ENCODE measurements at regions of chr6 and their contacts with region 1.

Region 1: GRCh38 chr6:30883685-30884520 is at the start of gene DDR1:
- DNase-seq: peak; percentile 95
- H3K4me3 Mint-ChIP-seq: peak within 1 kb of the TSS; percentile 83
- H3K27ac Mint-ChIP-seq: peak within 1 kb of the TSS; percentile 95
- H3K4me1 Mint-ChIP-seq: peaks cover 49% of the 10 kb centered on the region
- H3K27me3 Mint-ChIP-seq: no peaks in the 10 kb centered on the region
- CTCF ChIP-seq: no peak
- total RNA-seq, gene DDR1: 59.7 and 66.0 TPM in 2 replicates

Region 2: GRCh38 chr6:30508890-30509736 is 374.8 kb before region 1 on chr6:
- CTCF ChIA-PET with region 1: no interaction called
- POLR2A ChIA-PET with region 1: no interaction called
- intact Hi-C with region 1: no loop called
- DNase-seq: no peak
- H3K4me3 Mint-ChIP-seq: no peak overlapping the region
- H3K27ac Mint-ChIP-seq: no peak overlapping the region
- H3K4me1 Mint-ChIP-seq: no peaks in the 10 kb centered on the region
- H3K27me3 Mint-ChIP-seq: no peaks in the 10 kb centered on the region
- CTCF ChIP-seq: no peak

Region 3: DNA sequence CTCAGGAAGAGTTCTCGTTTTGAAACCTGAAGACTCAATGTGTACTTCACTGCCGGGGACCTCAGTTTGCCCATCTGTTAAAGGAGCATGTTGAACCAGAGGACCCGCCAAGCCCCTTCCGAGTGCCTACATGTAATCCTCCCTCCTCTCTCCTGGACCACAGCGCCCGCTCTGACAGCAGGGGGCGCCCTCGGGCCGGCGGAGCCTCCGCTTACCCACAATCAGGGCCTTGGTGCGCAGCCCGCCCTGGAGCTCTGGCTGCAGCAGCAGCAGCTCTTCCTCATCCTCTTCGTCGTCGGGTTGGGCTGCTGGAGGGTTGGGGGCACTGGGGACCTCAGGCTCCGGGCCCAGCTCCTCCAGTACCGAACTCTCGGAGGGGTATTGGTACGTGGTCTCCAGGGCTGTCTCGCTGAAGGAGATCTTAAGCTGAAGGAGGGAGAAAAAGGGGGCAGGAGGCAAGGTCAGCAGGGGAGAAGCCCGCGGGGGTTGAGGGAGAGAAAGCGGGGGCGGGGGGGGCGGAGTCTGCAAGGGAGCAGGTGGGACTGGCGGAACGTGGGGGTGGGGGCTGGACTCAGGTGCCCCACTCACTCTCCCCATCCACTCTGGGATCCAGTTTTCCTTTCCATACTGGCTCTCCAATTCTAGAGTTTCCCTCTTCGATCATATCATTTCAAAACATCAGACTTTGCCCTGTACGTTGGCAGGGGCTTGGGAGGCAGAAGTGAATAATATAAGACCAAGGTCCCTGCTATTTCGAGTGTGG is 204.8 kb before region 1 on chr6:
- CTCF ChIA-PET with region 1: interaction called, 5 read pairs
- POLR2A ChIA-PET with region 1: interaction called, 16 read pairs
- intact Hi-C with region 1: no loop called
- DNase-seq: peak; percentile 82
- H3K4me3 Mint-ChIP-seq: peak overlapping the region; percentile 41
- H3K27ac Mint-ChIP-seq: no peak overlapping the region
- H3K4me1 Mint-ChIP-seq: peaks cover 28% of the 10 kb centered on the region
- H3K27me3 Mint-ChIP-seq: no peaks in the 10 kb centered on the region
- CTCF ChIP-seq: peak; percentile 98

Region 4: DNA sequence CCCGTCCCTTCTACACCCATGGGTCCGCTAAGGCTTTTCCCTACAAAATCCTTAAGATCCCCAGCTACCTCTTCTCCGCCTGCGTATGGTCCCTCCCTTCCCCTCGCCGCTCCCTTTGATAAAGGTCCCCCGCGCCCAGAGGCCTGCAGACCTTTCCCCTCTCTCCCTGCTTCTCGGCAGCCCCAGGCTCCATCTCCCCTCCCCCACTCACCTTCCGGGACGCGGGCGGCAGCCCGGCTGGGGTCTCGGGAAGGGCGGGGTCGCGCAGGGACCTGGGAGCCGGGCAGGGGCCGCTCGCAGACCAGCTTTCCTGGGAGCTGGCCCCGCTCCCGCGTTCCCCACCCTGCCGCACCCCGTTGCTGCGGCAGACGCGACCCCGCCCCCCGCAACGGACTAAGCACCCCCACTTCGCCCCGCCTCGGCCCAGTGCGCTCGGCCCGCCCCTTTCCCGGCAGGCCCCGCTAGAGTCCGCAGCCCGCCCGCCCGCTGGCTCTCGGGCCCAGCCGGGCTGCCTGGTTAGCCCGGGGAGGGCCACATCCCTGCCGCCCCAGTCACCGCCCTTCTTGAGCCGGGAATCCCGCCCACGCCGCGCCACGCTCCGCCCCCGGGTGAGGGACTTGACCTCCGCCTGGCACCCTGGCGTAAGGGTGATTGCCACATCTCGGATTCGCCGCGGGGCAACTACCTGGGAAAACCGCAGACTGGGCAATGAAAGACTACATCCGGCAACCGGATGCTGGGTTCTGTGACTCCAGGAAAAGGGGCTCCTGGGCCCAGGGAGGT is 141.4 kb before region 1 on chr6 and contains the start of gene FLOT1:
- CTCF ChIA-PET with region 1: interaction called, 3 read pairs
- POLR2A ChIA-PET with region 1: interaction called, 30 read pairs
- intact Hi-C with region 1: loop called (anchors 2 kb)
- DNase-seq: peak; percentile 99
- H3K4me3 Mint-ChIP-seq: peak within 1 kb of the TSS; percentile 91
- H3K27ac Mint-ChIP-seq: peak within 1 kb of the TSS; percentile 90
- H3K4me1 Mint-ChIP-seq: peaks cover 38% of the 10 kb centered on the region
- H3K27me3 Mint-ChIP-seq: no peaks in the 10 kb centered on the region
- CTCF ChIP-seq: no peak
- total RNA-seq, gene FLOT1: 61.8 and 73.7 TPM in 2 replicates

Region 5: GRCh38 chr6:30828027-30828960 is 55.6 kb before region 1 on chr6:
- CTCF ChIA-PET with region 1: interaction called, 92 read pairs
- POLR2A ChIA-PET with region 1: interaction called, 80 read pairs
- intact Hi-C with region 1: no loop called
- DNase-seq: peak; percentile 93
- H3K4me3 Mint-ChIP-seq: no peak overlapping the region
- H3K27ac Mint-ChIP-seq: no peak overlapping the region
- H3K4me1 Mint-ChIP-seq: peaks cover 25% of the 10 kb centered on the region
- H3K27me3 Mint-ChIP-seq: no peaks in the 10 kb centered on the region
- CTCF ChIP-seq: peak; percentile 92

Region 6: GRCh38 chr6:30914076-30914853 is 30.4 kb after region 1 on chr6 and contains the start of gene VARS2:
- CTCF ChIA-PET with region 1: interaction called, 19 read pairs
- POLR2A ChIA-PET with region 1: interaction called, 100 read pairs
- intact Hi-C with region 1: loop called (anchors 2 kb)
- DNase-seq: peak; percentile 93
- H3K4me3 Mint-ChIP-seq: peak within 1 kb of the TSS; percentile 77
- H3K27ac Mint-ChIP-seq: peak within 1 kb of the TSS; percentile 92
- H3K4me1 Mint-ChIP-seq: peaks cover 19% of the 10 kb centered on the region
- H3K27me3 Mint-ChIP-seq: no peaks in the 10 kb centered on the region
- CTCF ChIP-seq: no peak
- total RNA-seq, gene VARS2: 38.8 and 52.7 TPM in 2 replicates

Region 7: GRCh38 chr6:31074401-31074800 is 190.5 kb after region 1 on chr6:
- CTCF ChIA-PET with region 1: interaction called, 12 read pairs
- POLR2A ChIA-PET with region 1: interaction called, 17 read pairs
- intact Hi-C with region 1: no loop called
- DNase-seq: no peak
- H3K4me3 Mint-ChIP-seq: no peak overlapping the region
- H3K27ac Mint-ChIP-seq: no peak overlapping the region
- H3K4me1 Mint-ChIP-seq: peaks cover 5% of the 10 kb centered on the region
- H3K27me3 Mint-ChIP-seq: no peaks in the 10 kb centered on the region
- CTCF ChIP-seq: no peak

Region 8: DNA sequence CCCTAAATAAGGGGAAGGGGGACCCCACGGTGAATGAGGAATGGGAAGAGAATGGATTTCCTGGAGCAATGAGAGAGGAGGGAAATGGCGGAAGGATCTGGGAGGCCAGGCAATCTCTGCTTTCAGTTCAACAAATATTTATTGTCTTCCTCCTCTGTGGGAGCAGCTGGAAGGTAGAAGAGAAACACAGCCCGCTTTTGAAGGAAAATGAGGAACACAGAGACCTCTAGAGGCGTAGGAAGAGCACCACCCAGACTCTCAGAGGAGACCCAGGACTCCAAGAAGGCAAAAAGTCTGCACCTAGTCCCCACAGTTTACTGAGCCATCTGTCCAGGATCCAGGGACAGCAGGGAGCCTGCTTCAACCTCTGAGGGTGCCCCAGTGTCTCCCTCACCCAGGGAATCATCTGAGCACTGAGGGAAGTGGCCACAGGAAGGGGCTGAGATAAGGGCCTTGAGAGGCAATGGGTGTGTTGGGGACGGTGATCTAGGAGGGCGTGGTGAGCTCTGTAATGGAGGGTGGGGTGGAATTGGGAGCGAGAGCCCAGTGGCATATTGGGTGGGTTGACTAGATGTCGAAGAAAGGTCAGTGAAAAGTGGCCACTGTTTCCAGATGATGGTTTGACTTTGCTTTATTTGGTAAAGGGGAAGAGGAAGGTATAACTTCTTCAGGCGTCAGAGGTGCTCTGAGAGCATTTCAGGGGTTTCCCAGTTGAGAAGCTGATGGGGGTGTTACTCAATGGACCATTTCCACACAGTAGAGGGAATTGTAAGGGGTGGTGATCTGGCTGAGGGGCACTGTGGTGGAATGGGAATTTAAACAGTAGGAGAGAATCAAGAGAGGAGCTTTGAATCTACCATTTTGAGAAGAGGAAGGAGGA is 231.3 kb after region 1 on chr6:
- CTCF ChIA-PET with region 1: interaction called, 6 read pairs
- POLR2A ChIA-PET with region 1: interaction called, 11 read pairs
- intact Hi-C with region 1: no loop called
- DNase-seq: peak; percentile 81
- H3K4me3 Mint-ChIP-seq: peak overlapping the region; percentile 79
- H3K27ac Mint-ChIP-seq: peak overlapping the region; percentile 98
- H3K4me1 Mint-ChIP-seq: peaks cover 21% of the 10 kb centered on the region
- H3K27me3 Mint-ChIP-seq: no peaks in the 10 kb centered on the region
- CTCF ChIP-seq: peak; percentile 33